Posterior cingulate gyrus (tissue), 11 donors: ENCODE measurements at regions of chr3 and their contacts with region 1.

Region 1: GRCh38 chr3:69739204-69740102 is at the start of gene MITF:
- DNase-seq: peak; percentile 91 to 99 (median 96)

Region 2: GRCh38 chr3:69784954-69785514 is 45.6 kb after region 1 on chr3:
- intact Hi-C with region 1: loop called (anchors 5 kb)
- DNase-seq: peak in 8 of 10 donors; percentile 13 to 93 (median 53)

Region 3: GRCh38 chr3:69893274-69893673 is 153.8 kb after region 1 on chr3:
- intact Hi-C with region 1: no loop called
- DNase-seq: no peak

Region 4: GRCh38 chr3:69948246-69948862 is 208.9 kb after region 1 on chr3:
- intact Hi-C with region 1: loop called (anchors 5 kb)
- DNase-seq: no peak